Gastrocnemius medialis (tissue), 4 donors: ENCODE measurements at regions of chr15 and their contacts with region 1.

Region 1: DNA sequence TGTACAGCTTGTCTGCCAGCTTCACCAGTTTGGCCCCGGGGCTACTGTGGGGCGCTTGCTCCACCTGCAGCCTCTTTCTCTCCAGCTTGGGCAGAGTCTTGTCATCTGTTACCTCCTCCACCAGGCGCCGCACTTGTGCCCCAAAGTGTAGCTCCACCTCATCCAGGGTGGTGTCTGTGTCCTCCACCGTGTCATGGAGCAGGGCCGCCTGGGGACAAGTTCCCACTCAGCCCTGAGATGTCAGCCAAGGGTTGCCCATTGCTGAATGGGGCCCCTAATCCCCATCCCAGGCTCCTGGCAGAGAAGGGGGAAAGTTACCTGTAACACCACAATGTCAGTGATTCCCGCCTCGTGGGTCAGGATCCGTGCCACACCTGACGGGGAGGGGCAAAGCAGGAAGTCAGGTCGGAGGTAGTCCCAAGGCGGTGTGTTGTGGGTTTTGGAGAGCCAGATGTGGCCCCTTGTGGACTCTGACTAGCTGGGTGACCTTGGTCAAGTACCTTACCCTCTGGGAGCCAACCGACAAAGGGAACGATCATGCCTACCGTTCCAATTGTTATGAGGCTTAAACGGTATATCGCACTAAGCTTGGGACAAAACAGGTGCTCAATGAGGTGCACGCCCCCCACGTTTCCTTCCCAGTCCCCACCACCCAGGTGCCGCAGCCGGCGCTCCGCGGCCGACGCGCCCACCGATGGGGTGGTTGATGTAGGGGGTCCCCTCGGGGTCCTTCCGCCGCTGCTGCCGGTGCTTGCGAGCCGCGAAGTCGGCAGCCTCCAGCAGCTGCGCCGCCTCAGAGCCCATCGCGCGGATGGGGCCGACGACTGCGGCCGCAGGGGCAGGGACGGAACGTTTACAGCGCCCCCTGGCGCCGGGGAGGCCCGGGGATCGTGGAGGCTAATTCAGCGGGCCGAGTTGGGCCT is at the start of gene HDDC3:
- DNase-seq: peak; percentile 72 to 86
- ATAC-seq: peak; percentile 49 to 65
- H3K4me3 ChIP-seq: peak within 1 kb of the TSS; percentile 66 to 92 (median 87)
- H3K27ac ChIP-seq: peak within 1 kb of the TSS; percentile 84 to 95 (median 89)
- H3K4me1 ChIP-seq: peaks cover 47 to 48% of the 10 kb centered on the region in 2 donors
- H3K27me3 ChIP-seq: no peaks in the 10 kb centered on the region
- CTCF ChIP-seq: peak; percentile 91 to 95 (median 92)
- POLR2A ChIP-seq: peak; percentile 34 to 69
- total RNA-seq, gene HDDC3: 13.4 to 22.2 (median 17.2) TPM

Region 2: GRCh38 chr15:90915808-90916440 is 16.1 kb before region 1 on chr15:
- in situ Hi-C with region 1: no loop called
- intact Hi-C with region 1: loop called (anchors 1 kb)
- DNase-seq: peak; percentile 84 to 94
- ATAC-seq: peak; percentile 80 to 84
- H3K4me3 ChIP-seq: peak overlapping the region in 3 of 4 donors; percentile 17 to 43 (median 27)
- H3K27ac ChIP-seq: peak overlapping the region; percentile 86 to 95 (median 90)
- H3K4me1 ChIP-seq: peaks cover 14 to 37% of the 10 kb centered on the region in 2 donors
- H3K27me3 ChIP-seq: no peaks in the 10 kb centered on the region
- CTCF ChIP-seq: no peak
- POLR2A ChIP-seq: peak in 1 of 2 donors; percentile 23

Region 3: DNA sequence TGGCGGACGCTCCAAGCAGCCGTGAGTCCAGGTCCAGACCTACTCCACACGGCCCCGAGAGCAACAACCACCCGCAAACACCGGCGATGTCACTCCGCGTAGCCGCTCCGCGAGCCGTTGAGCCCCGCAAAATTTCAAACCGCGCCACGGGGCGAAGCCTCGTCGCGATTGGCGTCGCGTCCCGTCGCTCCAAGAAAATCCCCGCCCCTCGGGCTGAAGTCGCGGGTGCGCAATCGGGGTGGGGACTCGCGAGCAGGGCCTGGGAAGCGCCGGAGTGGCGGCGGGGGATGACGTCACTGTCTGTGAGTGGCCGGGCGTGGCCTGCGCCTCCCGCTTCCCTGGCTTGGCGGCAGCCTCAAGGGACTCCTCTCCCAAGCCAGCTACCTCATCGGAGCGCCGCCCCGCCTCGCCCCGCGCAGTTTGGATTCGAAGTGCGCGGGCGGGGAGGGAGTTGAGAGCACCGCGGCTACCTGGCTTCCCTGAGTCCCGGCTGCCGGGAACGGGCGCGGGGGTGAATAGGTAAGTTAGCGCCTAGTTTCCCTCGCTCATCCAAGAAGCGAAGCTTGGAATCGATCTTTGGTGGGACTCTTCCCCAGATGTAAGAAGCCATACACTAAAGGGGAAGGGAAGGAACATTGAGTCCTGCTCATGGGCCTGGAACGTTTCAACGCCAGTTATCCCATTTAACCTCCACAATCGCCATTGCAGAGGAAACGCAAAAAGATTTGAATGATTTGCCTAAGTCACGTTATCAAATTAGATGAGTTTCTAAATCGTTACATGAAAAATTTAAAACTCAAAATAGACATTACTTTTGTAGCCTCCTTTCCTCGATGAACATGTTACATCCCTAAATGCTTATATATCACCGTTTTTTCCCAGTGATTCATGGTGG is 62.7 kb after region 1 on chr15 and contains the start of gene PRC1:
- in situ Hi-C with region 1: no loop called
- intact Hi-C with region 1: loop called (anchors 2 kb)
- DNase-seq: peak; percentile 97 to 98
- ATAC-seq: peak; percentile 98
- H3K4me3 ChIP-seq: peak within 1 kb of the TSS; percentile 77 to 99 (median 87)
- H3K27ac ChIP-seq: peak within 1 kb of the TSS; percentile 75 to 86 (median 82)
- H3K4me1 ChIP-seq: peaks cover 0 to 13% of the 10 kb centered on the region in 2 donors
- H3K27me3 ChIP-seq: no peaks in the 10 kb centered on the region
- CTCF ChIP-seq: no peak
- POLR2A ChIP-seq: peak; percentile 48 to 68
- total RNA-seq, gene PRC1: 1.4 to 9.9 (median 4.9) TPM